ENCODE measurements at regions of chr2 and their contacts with region 1.

Region 1: DNA sequence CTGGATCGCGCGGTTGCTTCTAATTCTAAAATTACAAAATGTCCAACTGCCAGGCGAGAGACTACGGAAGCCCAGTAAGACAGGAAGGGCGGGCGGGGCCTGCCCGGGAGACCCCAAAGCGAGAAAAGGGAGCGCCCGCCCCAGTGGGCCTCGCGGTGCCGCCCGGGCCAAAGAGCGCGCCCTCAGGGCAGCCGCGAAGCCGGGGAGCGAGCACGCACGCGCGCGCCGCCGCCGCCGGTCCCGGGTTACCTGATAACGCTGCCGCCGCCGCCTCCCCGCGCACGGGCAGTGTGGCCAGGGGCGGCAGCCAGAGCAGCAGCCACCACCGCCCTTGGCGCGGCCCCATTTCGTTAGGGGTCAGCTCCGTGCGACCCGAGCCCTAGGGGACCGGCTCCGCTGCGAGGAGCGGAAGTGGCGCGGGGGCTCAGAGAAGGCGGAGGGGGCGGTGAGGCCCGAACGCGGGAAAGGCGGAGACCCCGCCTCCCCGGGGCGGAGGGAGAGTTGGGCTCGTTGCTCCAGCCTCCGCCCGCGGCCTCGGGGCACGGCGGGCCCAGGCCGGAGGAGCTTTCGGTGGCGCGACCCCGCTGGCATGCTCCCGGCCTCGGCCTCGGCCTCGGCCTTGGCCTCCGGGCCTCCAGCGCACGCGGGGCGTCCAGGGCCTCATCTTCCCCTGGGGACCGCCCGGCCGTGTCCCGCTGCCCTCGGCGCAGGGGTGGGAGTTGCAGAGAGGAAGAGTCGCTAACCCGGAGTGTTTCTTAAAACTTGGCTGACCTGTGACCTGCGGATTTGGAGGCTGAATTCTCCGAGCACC is at the start of gene NEMP2:
- DNase-seq: peak; percentile 82
- H3K4me3 Mint-ChIP-seq: peak within 1 kb of the TSS; percentile 82
- H3K27ac Mint-ChIP-seq: peak within 1 kb of the TSS; percentile 85
- H3K4me1 Mint-ChIP-seq: peaks cover 33% of the 10 kb centered on the region
- H3K27me3 Mint-ChIP-seq: no peaks in the 10 kb centered on the region
- CTCF ChIP-seq: no peak
- total RNA-seq, gene NEMP2: 8.5 and 10.2 TPM in 2 replicates

Region 2: GRCh38 chr2:190571686-190572085 is 37.2 kb after region 1 on chr2:
- CTCF ChIA-PET with region 1: no interaction called
- intact Hi-C with region 1: loop called (anchors 5 kb)
- DNase-seq: peak; percentile 51
- H3K4me3 Mint-ChIP-seq: no peak overlapping the region
- H3K27ac Mint-ChIP-seq: peak overlapping the region; percentile 57
- H3K4me1 Mint-ChIP-seq: peaks cover 23% of the 10 kb centered on the region
- H3K27me3 Mint-ChIP-seq: no peaks in the 10 kb centered on the region
- CTCF ChIP-seq: no peak

Region 3: GRCh38 chr2:190648289-190649034 is 113.9 kb after region 1 on chr2:
- CTCF ChIA-PET with region 1: no interaction called
- intact Hi-C with region 1: loop called (anchors 10 kb)
- DNase-seq: peak; percentile 84
- H3K4me3 Mint-ChIP-seq: peak overlapping the region; percentile 88
- H3K27ac Mint-ChIP-seq: peak overlapping the region; percentile 78
- H3K4me1 Mint-ChIP-seq: no peaks in the 10 kb centered on the region
- H3K27me3 Mint-ChIP-seq: no peaks in the 10 kb centered on the region
- CTCF ChIP-seq: no peak

Measured in Calu3 (cell line).